Posterior vena cava (tissue), 2 donors: ENCODE measurements at regions of chr7 and their contacts with region 1.

Region 1: GRCh38 chr7:107661081-107661864 is 645 bp downstream of the SLC26A4 start:
- DNase-seq: peak; percentile 83

Region 2: GRCh38 chr7:107563775-107564552 is 97.3 kb before region 1 on chr7 and contains the starts of genes COG5 and DUS4L:
- intact Hi-C with region 1: no loop called
- DNase-seq: peak; percentile 94
- total RNA-seq, gene COG5: 41.8 to 50.2 TPM
- total RNA-seq, gene DUS4L: 5.4 to 6.6 TPM

Region 3: DNA sequence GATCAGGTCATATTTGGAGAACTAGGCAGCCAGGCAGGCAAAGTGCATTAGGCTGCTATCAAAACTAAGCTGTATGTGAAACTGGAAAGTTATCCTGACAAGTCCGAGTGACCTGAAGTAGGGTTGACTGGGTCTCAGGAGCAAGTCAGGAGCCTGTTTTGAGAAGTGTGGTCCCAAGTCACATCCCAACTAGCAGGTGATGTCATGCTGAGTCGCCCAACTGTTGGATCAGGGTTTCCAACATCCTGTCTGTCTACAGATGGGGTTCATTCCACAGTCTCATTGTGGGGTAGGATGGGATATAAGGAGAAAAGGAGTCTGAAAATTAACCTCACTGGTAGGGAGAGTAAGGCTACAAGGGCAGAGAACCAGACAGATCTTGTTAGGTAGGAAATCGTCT is 26.4 kb after region 1 on chr7:
- intact Hi-C with region 1: loop called in 1 of 2 experiments (anchors 1 kb)
- DNase-seq: no peak